K562 (cell line): ENCODE measurements at regions of chr15 and their contacts with region 1.

Region 1: GRCh38 chr15:75201609-75202250 is at the start of gene C15orf39:
- DNase-seq: peak; percentile 80 to 93 (median 92)
- ATAC-seq: peak; percentile 78
- H3K4me3 ChIP-seq: peak within 1 kb of the TSS; percentile 89
- H3K27ac ChIP-seq: peak within 1 kb of the TSS; percentile 84
- H3K4me1 ChIP-seq: peaks cover 44 to 50% of the 10 kb centered on the region in 2 experiments
- H3K27me3 ChIP-seq: no peaks in the 10 kb centered on the region; a peak in 1 of 5 replicates
- CTCF ChIP-seq: peak; percentile 64 to 86 (median 77)
- EP300 ChIP-seq: no peak
- POLR2A ChIP-seq: peak; percentile 93
- RAD21 ChIP-seq: peak; percentile 68 to 75
- polyA plus RNA-seq, gene C15orf39: 0.31 to 0.60 TPM

Region 2: DNA sequence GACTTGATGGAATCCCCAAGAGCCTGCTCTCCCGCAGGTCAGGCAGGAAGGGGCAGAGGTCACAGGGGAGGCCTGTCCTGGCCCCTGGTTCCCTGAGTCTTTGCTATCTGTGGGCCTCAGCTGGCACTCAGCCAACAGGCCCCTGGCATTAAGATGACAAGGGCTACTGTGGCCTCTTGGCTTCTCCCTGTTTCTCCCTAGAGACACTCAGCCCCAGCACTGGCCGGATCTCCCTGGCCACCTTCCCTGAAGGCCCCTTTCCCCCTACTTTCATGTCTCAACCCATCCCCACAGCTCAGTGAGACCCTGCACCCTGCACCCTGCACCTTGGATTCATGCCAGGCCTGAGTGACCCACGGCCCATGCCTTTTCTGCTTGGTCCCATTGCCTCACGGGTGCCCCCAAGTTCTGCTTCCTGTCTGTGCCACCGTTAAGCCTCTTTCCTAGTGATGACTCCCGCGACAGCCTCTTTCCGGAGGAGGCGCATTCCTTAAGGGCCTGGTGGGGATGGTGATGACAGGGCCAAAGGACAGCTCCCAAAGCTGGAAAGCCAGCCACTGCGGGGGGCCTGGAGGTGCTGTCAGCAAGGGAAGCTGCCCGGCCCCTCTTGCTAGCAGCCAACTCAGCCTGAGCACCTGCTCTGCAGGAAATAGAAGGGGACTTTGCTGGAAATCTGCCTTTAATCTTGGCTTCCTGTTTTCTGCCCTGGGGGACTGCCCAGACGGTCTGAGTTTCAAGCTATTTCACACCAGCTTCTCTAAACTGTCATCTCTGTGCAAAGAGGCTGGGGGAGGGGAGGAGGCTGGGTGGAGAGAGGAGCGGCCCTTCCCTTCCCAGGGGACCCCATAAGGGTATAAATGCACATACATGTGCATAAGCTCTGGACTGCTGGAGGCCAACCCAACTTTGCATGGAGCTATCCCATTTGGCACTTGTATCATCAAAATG is 424.6 kb before region 1 on chr15:
- CTCF ChIA-PET with region 1: no interaction called
- POLR2A ChIA-PET with region 1: no interaction called
- in situ Hi-C with region 1: no loop called
- intact Hi-C with region 1: loop called (anchors 10 kb)
- DNase-seq: no peak
- ATAC-seq: no peak; the same call in 2 of the 3 replicates
- H3K4me3 ChIP-seq: no peak overlapping the region
- H3K27ac ChIP-seq: no peak overlapping the region
- H3K4me1 ChIP-seq: peaks cover 32 to 43% of the 10 kb centered on the region in 2 experiments
- H3K27me3 ChIP-seq: no peaks in the 10 kb centered on the region
- CTCF ChIP-seq: no peak
- EP300 ChIP-seq: peak; percentile 27; the same call in 1 of the 2 replicates
- POLR2A ChIP-seq: no peak
- RAD21 ChIP-seq: no peak

Region 3: GRCh38 chr15:74956648-74957300 is 245.0 kb before region 1 on chr15 and contains the start of gene RPP25:
- CTCF ChIA-PET with region 1: interaction called, 3 read pairs
- POLR2A ChIA-PET with region 1: interaction called, 4 read pairs
- in situ Hi-C with region 1: no loop called
- intact Hi-C with region 1: loop called (anchors 10 kb)
- DNase-seq: peak; percentile 85 to 90 (median 88)
- ATAC-seq: peak; percentile 91
- H3K4me3 ChIP-seq: peak within 1 kb of the TSS; percentile 52
- H3K27ac ChIP-seq: peak within 1 kb of the TSS; percentile 68
- H3K4me1 ChIP-seq: peaks cover 36 to 63% of the 10 kb centered on the region in 2 experiments
- H3K27me3 ChIP-seq: peaks cover 23 to 32% of the 10 kb centered on the region in 2 experiments
- CTCF ChIP-seq: no peak
- EP300 ChIP-seq: no peak
- POLR2A ChIP-seq: peak; percentile 70; the same call in 1 of the 2 replicates
- RAD21 ChIP-seq: no peak
- polyA plus RNA-seq, gene RPP25: 1.1 to 1.3 TPM

Region 4: DNA sequence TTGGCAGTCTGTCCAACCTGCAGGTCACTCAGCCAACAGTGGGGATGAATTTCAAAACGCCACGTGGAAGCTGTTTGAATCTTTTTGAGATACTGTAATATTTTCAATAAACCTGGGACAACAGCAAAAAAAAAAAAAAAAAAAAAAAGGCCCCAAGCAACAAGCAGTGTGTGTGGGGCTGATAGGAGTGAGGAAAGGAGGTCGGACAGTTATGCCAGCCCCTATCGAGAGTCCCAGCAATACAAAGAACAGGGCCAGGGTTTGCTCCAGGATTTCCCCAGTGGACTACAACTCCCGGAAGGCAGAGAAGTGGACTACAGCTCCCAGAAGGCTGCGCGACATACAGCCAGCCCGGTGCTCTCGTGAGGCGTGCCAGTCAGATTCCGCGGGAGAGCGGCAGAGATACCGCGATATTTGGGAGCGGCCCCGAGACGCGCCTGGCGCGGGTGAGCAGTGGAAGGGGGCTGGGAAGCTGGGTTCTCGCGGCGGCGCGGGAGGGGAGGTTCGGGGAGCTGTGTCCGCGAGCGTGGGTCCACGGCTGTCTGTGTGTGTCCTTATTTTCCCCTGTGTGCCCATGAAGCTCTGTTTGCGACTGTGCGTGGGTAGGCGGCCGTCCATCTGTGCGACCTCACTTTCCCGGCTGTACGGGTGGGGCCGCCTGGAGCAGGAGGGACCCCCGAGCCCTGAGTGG is 178.4 kb before region 1 on chr15 and contains the start of gene PPCDC:
- CTCF ChIA-PET with region 1: interaction called, 76 read pairs
- POLR2A ChIA-PET with region 1: interaction called, 18 read pairs
- in situ Hi-C with region 1: loop called (anchors 5 kb)
- intact Hi-C with region 1: no loop called
- DNase-seq: peak; percentile 96 to 98 (median 97)
- ATAC-seq: peak; percentile 98
- H3K4me3 ChIP-seq: peak within 1 kb of the TSS; percentile 80
- H3K27ac ChIP-seq: peak within 1 kb of the TSS; percentile 95
- H3K4me1 ChIP-seq: peaks cover 10 to 18% of the 10 kb centered on the region in 2 experiments; a peak in 4 of 5 replicates
- H3K27me3 ChIP-seq: no peaks in the 10 kb centered on the region; a peak in 1 of 5 replicates
- CTCF ChIP-seq: peak in 1 of 3 experiments; percentile 18; a peak in 1 of 6 replicates
- EP300 ChIP-seq: peak; percentile 57
- POLR2A ChIP-seq: peak; percentile 99
- RAD21 ChIP-seq: peak in 1 of 2 experiments; percentile 7; a peak in 1 of 4 replicates
- polyA plus RNA-seq, gene PPCDC: 50.0 to 53.6 TPM

Region 5: DNA sequence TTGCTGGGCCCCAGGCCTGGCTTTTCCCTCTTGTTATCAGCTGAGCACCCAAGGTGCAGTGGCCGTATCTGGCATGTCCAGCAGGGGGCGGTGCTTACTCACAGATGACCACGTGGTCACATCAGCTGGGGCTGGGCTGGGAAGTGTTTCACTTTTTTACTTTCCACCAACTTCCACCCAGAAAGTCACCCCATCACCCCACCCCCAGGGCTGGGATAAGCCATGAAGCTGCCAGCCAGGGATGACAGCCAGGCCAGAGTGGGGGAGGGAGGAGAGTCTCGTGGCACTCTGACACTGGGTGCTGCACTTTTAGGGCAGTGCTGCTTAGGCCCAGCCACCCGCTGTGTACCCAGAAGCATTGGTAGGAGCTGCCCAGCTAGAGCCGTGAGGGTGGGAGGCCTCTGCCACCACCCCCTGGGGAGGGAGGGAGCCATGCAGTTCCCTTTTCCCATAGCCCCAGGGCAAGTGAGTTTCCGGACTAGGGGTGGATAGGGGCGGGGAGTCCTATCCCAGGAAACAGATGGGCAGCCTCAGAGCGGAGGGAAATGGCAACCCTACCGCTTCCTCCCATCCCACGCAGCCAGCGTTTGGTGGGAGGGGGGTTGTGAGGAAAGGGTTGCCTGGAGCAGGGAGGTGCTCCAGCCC is 172.2 kb before region 1 on chr15:
- CTCF ChIA-PET with region 1: interaction called, 76 read pairs
- POLR2A ChIA-PET with region 1: interaction called, 20 read pairs
- in situ Hi-C with region 1: loop called (anchors 5 kb)
- intact Hi-C with region 1: loop called (anchors 1 kb)
- DNase-seq: peak; percentile 81 to 94 (median 84)
- ATAC-seq: peak; percentile 95
- H3K4me3 ChIP-seq: no peak overlapping the region
- H3K27ac ChIP-seq: no peak overlapping the region; the same call in 2 of the 3 replicates
- H3K4me1 ChIP-seq: peaks cover 22 to 25% of the 10 kb centered on the region in 2 experiments
- H3K27me3 ChIP-seq: no peaks in the 10 kb centered on the region
- CTCF ChIP-seq: peak; percentile 94 to 97 (median 95)
- EP300 ChIP-seq: peak; percentile 33; the same call in 1 of the 2 replicates
- POLR2A ChIP-seq: no peak
- RAD21 ChIP-seq: peak; percentile 98

Region 6: DNA sequence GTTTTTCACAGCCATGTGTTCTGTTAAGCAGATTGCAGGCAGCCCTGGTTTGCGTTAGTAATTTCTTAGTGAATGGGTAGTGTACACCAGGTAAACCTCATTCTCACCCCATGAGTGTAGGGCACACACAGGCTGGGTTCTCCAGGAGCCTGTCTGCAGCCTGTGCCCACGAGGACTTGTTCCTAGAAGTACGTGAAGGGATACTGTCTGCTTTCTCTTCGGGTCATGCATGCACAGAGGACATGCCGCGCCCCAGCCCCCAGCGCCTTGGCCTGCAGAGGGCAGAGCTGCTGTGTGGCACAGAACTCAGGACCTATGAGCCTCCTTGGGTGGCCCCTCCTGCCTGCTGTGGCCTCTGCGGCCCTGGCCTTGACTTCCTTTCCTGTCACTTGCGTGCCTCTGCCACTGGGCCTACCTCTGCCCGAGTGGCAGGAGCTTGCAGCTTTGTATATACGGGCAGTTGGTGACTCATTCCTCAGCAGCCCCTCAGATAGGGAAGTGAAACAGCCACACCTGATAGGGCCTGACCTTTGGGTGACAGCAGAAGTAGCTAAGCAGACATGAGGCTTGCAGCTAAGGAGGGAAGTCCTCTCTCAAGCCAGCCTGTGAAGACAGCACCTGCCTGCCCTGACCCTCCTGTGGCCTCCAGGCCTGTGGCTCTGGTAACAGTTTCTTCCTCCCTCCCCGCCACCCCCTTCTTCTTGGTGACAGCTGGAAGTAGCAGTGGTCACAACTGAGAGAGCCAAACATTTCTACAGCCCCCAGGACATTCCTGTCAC is 158.8 kb before region 1 on chr15:
- CTCF ChIA-PET with region 1: interaction called, 19 read pairs
- POLR2A ChIA-PET with region 1: interaction called, 16 read pairs
- in situ Hi-C with region 1: no loop called
- intact Hi-C with region 1: loop called (anchors 1 kb)
- DNase-seq: peak; percentile 68 to 86 (median 72)
- ATAC-seq: peak; percentile 66
- H3K4me3 ChIP-seq: no peak overlapping the region; the same call in 1 of the 2 replicates
- H3K27ac ChIP-seq: peak overlapping the region; percentile 91
- H3K4me1 ChIP-seq: peaks cover 53 to 57% of the 10 kb centered on the region in 2 experiments
- H3K27me3 ChIP-seq: no peaks in the 10 kb centered on the region
- CTCF ChIP-seq: peak; percentile 41 to 55 (median 55); a peak in 5 of 6 replicates
- EP300 ChIP-seq: peak; percentile 80
- POLR2A ChIP-seq: no peak
- RAD21 ChIP-seq: peak in 1 of 2 experiments; percentile 63; a peak in 3 of 4 replicates

Region 7: DNA sequence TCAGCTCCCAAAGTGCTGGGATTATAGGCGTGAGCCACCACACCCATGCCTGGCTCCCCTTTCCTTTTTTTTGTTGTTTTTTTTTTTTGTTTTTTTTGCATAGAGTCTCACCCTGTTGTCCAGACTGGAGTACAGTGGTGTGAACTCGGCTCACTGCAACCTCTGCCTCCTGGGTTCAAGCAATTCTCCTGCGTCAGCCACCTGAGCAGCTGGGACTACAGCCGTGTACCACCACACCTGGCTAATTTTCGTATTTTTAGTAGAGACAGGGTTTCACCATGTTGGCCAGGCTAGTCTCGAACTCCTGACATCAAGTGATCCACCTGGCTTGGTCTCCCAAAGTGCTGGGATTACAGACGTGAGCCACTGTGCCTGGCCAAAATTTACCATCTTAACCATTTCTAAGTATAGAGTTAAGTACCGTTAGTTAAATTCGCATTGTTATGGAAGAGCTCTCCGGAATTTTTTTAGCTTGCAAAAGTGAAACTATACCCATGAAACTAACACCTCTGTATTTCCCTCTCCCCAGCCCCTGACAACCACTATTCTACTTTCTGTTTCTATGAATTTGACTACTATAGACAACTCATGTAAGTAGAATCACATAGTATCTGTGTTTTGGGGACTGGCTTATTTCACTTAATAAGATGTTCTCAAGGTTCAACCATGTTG is 71.0 kb before region 1 on chr15:
- CTCF ChIA-PET with region 1: no interaction called
- POLR2A ChIA-PET with region 1: interaction called, 3 read pairs
- in situ Hi-C with region 1: no loop called
- intact Hi-C with region 1: loop called (anchors 5 kb)
- DNase-seq: no peak
- ATAC-seq: no peak
- H3K4me3 ChIP-seq: no peak overlapping the region
- H3K27ac ChIP-seq: no peak overlapping the region
- H3K4me1 ChIP-seq: peaks cover 4 to 7% of the 10 kb centered on the region in 2 experiments; a peak in 2 of 5 replicates
- H3K27me3 ChIP-seq: no peaks in the 10 kb centered on the region
- CTCF ChIP-seq: no peak
- EP300 ChIP-seq: no peak
- POLR2A ChIP-seq: no peak
- RAD21 ChIP-seq: no peak

Region 8: DNA sequence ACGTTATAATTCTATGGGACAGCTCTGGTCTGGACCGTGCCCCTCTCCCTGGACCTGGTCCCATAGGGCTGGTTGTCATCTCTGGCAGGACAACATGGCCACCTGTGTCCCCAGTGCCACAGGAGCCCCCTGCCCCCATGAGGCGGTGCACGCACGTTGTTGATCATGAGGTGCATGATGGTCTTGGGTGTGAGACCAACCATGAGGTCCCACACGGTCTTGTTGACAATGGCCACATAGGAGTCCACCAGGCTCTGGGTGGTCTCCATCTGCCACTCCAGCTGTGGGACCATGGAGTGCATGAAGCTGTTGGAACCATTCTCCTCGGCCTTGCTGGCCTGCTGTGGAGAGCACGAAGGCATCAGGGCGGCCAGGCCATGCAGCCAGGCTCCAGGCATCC is 100.6 kb after region 1 on chr15:
- CTCF ChIA-PET with region 1: no interaction called
- POLR2A ChIA-PET with region 1: no interaction called
- in situ Hi-C with region 1: no loop called
- intact Hi-C with region 1: no loop called
- DNase-seq: no peak
- ATAC-seq: no peak
- H3K4me3 ChIP-seq: no peak overlapping the region
- H3K27ac ChIP-seq: no peak overlapping the region
- H3K4me1 ChIP-seq: peaks cover 0 to 3% of the 10 kb centered on the region in 2 experiments; a peak in 1 of 5 replicates
- H3K27me3 ChIP-seq: peaks cover 10 to 29% of the 10 kb centered on the region in 2 experiments; a peak in 4 of 5 replicates
- CTCF ChIP-seq: no peak
- EP300 ChIP-seq: no peak
- POLR2A ChIP-seq: no peak
- RAD21 ChIP-seq: no peak

Region 9: DNA sequence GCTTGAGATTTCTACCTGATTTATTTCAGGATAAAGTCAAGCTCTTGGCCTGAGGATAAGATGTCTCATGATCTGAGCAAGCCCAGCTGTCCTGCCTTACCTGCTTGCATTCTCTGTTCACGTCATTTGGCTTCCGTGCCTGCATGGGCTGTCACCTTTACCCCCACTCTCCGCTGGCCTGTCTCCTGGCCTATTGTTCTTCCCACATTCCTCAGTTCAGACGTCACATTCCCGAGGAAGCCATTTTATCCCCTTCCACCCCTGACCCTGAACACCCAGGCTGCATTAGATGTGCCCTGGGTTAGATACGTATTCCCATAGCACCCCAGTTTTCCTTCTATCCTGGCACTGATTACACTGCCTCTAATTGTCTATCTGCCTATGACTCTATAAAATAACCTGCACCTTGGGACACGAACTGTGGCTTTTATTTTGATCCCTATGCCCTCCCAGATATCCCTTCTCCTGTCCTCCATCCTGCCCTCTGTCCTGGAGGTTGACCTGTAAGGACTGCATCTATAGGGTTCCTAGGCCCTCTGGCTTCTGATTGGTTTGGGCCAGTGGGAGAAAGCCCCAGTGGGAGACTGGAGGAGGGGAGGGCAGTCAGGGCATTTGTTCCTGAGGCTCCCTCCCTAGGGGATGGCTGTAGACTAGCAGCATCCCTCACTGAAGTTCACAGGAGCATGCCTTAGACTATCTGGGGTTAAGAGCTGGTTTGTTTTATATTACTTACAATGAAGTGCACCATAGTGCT is 622.3 kb after region 1 on chr15:
- CTCF ChIA-PET with region 1: no interaction called
- POLR2A ChIA-PET with region 1: no interaction called
- in situ Hi-C with region 1: no loop called
- intact Hi-C with region 1: no loop called
- DNase-seq: peak in 1 of 4 experiments; percentile 20
- ATAC-seq: no peak
- H3K4me3 ChIP-seq: no peak overlapping the region
- H3K27ac ChIP-seq: no peak overlapping the region
- H3K4me1 ChIP-seq: peaks cover 4 to 17% of the 10 kb centered on the region in 2 experiments; a peak in 4 of 5 replicates
- H3K27me3 ChIP-seq: no peaks in the 10 kb centered on the region
- CTCF ChIP-seq: no peak
- EP300 ChIP-seq: no peak
- POLR2A ChIP-seq: no peak
- RAD21 ChIP-seq: no peak